ENCODE measurements at regions of chr17 and their contacts with region 1.

Region 1: DNA sequence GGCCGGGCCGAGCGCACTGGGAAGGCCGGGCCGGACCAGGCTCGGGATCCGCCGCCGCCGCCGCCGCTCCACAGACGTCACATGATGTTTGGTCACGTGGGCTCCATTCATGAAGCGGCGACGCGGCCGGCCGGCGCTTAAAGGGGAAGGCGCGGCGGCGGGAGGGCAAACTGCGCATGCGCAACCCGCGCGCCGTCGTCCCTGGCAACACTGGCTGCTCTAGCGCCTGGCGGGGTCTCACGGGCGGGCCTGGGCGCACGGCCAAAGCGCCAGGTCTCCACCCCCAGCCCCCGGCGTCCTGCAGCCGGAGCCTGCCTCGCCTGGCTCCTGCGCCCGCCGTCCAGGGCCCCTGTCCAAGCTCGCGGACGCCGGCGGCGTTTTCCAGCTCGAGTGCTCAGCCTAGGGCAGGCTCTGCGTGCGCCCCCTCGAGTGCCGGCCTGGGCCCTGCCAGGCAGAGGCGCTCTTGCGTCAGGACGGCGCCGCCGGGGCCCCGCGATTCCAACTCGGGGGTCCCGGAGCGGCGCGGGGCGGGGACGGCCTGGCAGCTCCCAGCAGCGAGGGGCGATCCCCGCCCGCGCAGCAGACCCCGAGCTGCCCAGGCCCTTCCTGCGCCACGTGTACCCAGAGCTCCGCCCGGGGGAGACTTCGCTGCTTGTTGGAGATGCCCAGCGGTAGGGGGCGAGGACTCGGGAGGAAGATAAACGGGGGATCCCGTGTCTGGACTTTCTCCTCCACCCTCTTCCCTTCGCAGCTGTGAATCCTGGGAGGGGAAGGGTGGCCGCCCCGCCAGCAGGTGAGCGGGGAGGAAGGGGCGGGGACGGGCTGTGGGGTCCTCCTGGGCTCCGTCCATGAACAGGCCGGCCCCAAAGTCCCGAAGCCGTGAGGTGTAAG is at the start of gene MAFG:
- DNase-seq: peak; percentile 85 to 92 (median 90)
- H3K4me3 ChIP-seq: peak within 1 kb of the TSS; percentile 47 to 60
- H3K4me3 Mint-ChIP-seq: peak within 1 kb of the TSS; percentile 81 to 90 (median 84)
- H3K27ac ChIP-seq: peak within 1 kb of the TSS; percentile 68
- H3K27ac Mint-ChIP-seq: peak within 1 kb of the TSS; percentile 84 to 97 (median 90)
- H3K4me1 ChIP-seq: peaks cover 43% of the 10 kb centered on the region
- H3K4me1 Mint-ChIP-seq: peaks cover 12 to 27% (median 20%) of the 10 kb centered on the region in 4 donors
- H3K27me3 ChIP-seq: peaks cover 10% of the 10 kb centered on the region
- H3K27me3 Mint-ChIP-seq: peaks cover 0 to 6% of the 10 kb centered on the region in 2 donors
- total RNA-seq, gene MAFG: 16.0 to 16.3 TPM

Region 2: DNA sequence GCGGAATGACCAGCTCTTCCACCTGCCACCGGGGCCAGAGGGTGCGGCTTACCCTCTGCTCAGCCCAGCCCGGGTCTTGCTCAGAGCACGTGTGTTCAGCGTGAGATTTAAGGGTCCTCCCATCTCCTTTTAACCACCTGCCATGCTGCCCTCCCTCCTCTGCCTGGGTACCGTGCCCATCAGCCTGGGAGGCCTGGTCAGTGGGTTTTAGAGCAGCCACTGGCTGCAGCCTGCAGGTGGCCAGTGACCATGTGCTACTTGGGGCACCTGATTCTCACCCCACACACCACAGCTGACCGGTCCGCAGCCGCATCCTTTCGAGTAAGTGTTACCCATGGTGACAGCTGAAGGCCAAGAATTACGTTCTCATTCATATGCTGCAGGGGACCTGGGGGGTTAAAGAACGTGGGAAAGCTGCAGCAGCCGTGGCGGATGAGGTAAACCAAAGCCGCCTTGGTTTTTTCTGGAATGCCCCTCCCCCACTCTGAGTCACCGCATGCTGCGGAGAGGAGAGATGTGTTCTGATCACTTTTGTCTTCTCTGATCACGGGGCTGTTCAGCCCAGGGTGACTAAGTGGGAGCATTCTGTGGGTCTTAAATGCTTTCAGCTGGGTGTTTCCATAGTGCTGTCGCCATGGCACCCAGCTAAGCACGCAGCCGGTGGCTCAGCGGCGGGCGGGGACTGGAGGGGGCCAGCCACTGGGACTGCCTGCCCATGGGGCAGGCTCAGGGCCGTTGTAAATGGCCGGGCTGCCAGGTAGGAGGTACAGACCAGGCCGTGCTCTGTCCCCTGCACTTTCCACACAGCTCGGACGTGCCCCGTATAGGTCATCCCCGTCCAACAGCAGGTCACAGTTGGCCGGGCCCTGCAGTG is 833.2 kb before region 1 on chr17:
- CTCF ChIA-PET with region 1: no interaction called
- POLR2A ChIA-PET with region 1: no interaction called
- intact Hi-C with region 1: loop called (anchors 10 kb)
- DNase-seq: peak; percentile 86 to 96 (median 88)
- H3K4me3 ChIP-seq: peak overlapping the region in 1 of 2 donors; percentile 10
- H3K4me3 Mint-ChIP-seq: peak overlapping the region; percentile 52 to 88 (median 70)
- H3K27ac ChIP-seq: peak overlapping the region; percentile 66
- H3K27ac Mint-ChIP-seq: peak overlapping the region; percentile 91 to 96 (median 93)
- H3K4me1 ChIP-seq: peaks cover 56% of the 10 kb centered on the region
- H3K4me1 Mint-ChIP-seq: peaks cover 24 to 56% (median 38%) of the 10 kb centered on the region in 4 donors
- H3K27me3 ChIP-seq: no peaks in the 10 kb centered on the region
- H3K27me3 Mint-ChIP-seq: no peaks in the 10 kb centered on the region

Region 3: GRCh38 chr17:81815646-81815986 is 112.3 kb before region 1 on chr17:
- CTCF ChIA-PET with region 1: no interaction called
- POLR2A ChIA-PET with region 1: no interaction called
- intact Hi-C with region 1: no loop called
- DNase-seq: no peak
- H3K4me3 ChIP-seq: no peak overlapping the region
- H3K4me3 Mint-ChIP-seq: no peak overlapping the region
- H3K27ac ChIP-seq: no peak overlapping the region
- H3K27ac Mint-ChIP-seq: no peak overlapping the region
- H3K4me1 ChIP-seq: no peaks in the 10 kb centered on the region
- H3K4me1 Mint-ChIP-seq: peaks cover 0 to 2% (median 0%) of the 10 kb centered on the region in 4 donors
- H3K27me3 ChIP-seq: no peaks in the 10 kb centered on the region
- H3K27me3 Mint-ChIP-seq: peaks cover 0 to 2% of the 10 kb centered on the region in 2 donors

Region 4: GRCh38 chr17:81852237-81852636 is 75.7 kb before region 1 on chr17:
- CTCF ChIA-PET with region 1: no interaction called
- POLR2A ChIA-PET with region 1: no interaction called
- intact Hi-C with region 1: no loop called
- DNase-seq: no peak
- H3K4me3 ChIP-seq: no peak overlapping the region
- H3K4me3 Mint-ChIP-seq: no peak overlapping the region
- H3K27ac ChIP-seq: no peak overlapping the region
- H3K27ac Mint-ChIP-seq: no peak overlapping the region
- H3K4me1 ChIP-seq: no peaks in the 10 kb centered on the region
- H3K4me1 Mint-ChIP-seq: peaks cover 0 to 15% (median under 1%) of the 10 kb centered on the region in 4 donors
- H3K27me3 ChIP-seq: no peaks in the 10 kb centered on the region
- H3K27me3 Mint-ChIP-seq: no peaks in the 10 kb centered on the region

Region 5: DNA sequence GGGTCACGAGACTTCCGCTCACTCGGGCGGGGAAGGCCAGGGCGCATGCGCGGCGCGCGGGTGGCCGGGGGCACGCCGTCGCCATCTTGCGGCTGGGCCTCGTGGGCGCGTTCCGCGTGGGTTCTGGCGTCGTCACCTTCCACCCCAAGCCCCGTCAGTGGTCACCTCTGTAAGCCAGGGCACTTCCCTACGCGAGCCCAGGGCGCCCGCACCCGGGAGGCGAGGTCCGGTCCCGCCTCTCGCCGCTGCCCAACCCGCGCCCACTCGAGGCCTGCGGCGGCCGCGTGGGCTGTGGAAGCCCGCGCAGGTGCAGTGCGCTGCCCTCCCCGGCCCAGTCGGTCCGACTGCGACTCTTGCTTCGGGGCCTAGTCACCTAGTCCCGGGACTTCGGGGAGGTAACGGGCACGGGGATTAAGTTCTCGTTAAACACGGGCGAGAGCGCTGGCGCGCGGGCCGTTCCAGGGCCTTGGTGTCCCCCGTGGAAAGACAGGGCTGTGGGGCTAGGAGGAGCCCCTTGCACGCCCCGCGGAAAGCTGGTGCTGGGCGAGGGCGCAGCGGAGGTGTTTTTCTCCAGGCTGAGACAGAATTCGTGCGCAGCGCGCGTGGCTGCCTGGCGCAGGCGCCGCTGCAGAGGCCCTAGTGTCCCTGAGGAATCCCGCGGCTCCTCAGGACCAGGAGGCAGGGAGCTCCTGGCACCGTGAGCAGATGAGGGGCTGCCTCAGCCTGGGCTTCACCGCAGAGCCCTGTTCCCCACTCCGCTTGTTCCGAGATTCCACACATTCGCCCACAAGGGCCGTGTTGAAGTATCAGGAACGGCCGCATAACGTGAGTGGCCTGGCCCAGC is 56.3 kb before region 1 on chr17:
- CTCF ChIA-PET with region 1: interaction called, 3 read pairs
- POLR2A ChIA-PET with region 1: interaction called, 40 read pairs
- intact Hi-C with region 1: no loop called
- DNase-seq: peak; percentile 95 to 97 (median 96)
- H3K4me3 ChIP-seq: peak overlapping the region; percentile 84 to 95
- H3K4me3 Mint-ChIP-seq: peak overlapping the region; percentile 81 to 91 (median 86)
- H3K27ac ChIP-seq: peak overlapping the region; percentile 95
- H3K27ac Mint-ChIP-seq: peak overlapping the region; percentile 93 to 97 (median 96)
- H3K4me1 ChIP-seq: peaks cover 50% of the 10 kb centered on the region
- H3K4me1 Mint-ChIP-seq: peaks cover 9 to 53% (median 30%) of the 10 kb centered on the region in 4 donors
- H3K27me3 ChIP-seq: no peaks in the 10 kb centered on the region
- H3K27me3 Mint-ChIP-seq: no peaks in the 10 kb centered on the region

Region 6: DNA sequence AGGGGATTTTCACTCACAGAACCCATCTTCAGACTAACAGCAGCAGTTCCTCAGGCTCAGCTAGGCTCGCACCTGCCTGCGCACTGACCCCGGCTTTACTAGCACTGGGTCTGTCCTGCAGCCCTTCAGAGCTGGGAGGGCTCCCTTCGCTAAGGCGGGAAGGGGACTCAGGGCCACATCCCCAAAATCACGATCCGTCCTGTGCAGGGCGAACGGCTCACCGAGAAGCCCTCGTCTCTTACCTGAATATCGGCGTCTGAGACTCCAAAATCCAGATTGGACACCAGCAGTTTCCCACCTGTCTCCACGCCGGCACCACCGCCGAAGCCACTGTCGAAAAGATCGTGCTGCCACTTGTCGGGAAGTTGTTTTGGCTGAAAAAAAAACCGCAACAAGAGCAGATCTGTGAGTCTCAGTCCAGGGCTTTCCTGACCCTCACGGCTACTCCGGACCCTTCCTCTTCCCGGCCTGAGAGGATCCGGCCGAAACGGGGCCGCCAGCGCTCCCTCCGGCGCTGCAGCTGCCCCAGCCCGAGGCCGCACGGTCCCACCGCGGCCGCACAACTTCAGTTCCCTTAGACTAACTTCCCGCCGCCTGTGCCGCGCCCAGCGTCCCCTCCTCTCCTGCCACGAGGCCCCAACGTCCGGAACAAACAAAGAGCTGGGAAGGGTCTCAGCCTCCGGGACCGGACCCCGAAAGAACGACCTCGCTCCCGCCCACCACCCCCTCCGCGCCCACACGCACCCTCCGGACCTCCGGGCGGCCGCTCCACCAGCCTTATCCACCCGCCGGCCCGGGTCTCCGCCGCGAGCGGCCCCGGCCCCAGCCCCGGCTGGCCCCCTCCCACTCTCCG is 37.2 kb before region 1 on chr17:
- CTCF ChIA-PET with region 1: no interaction called
- POLR2A ChIA-PET with region 1: interaction called, 17 read pairs
- intact Hi-C with region 1: loop called (anchors 2 kb)
- DNase-seq: no peak
- H3K4me3 ChIP-seq: peak overlapping the region; percentile 42 to 60
- H3K4me3 Mint-ChIP-seq: peak overlapping the region; percentile 85 to 92 (median 89)
- H3K27ac ChIP-seq: peak overlapping the region; percentile 64
- H3K27ac Mint-ChIP-seq: peak overlapping the region; percentile 89 to 97 (median 96)
- H3K4me1 ChIP-seq: peaks cover 20% of the 10 kb centered on the region
- H3K4me1 Mint-ChIP-seq: peaks cover 8 to 33% (median 17%) of the 10 kb centered on the region in 4 donors
- H3K27me3 ChIP-seq: no peaks in the 10 kb centered on the region
- H3K27me3 Mint-ChIP-seq: no peaks in the 10 kb centered on the region

Region 7: GRCh38 chr17:81911277-81911961 is 16.5 kb before region 1 on chr17 and contains the start of gene PCYT2:
- CTCF ChIA-PET with region 1: interaction called, 3 read pairs
- POLR2A ChIA-PET with region 1: interaction called, 33 read pairs
- intact Hi-C with region 1: no loop called
- DNase-seq: peak; percentile 90 to 94 (median 93)
- H3K4me3 ChIP-seq: peak within 1 kb of the TSS; percentile 8 to 70
- H3K4me3 Mint-ChIP-seq: peak within 1 kb of the TSS; percentile 81 to 90 (median 86)
- H3K27ac ChIP-seq: peak within 1 kb of the TSS; percentile 55
- H3K27ac Mint-ChIP-seq: peak within 1 kb of the TSS in 6 of 7 donors; percentile 8 to 85 (median 82)
- H3K4me1 ChIP-seq: peaks cover 26% of the 10 kb centered on the region
- H3K4me1 Mint-ChIP-seq: peaks cover 5 to 34% (median 10%) of the 10 kb centered on the region in 4 donors
- H3K27me3 ChIP-seq: no peaks in the 10 kb centered on the region
- H3K27me3 Mint-ChIP-seq: no peaks in the 10 kb centered on the region
- total RNA-seq, gene PCYT2: 43.5 to 48.3 TPM

Region 8: DNA sequence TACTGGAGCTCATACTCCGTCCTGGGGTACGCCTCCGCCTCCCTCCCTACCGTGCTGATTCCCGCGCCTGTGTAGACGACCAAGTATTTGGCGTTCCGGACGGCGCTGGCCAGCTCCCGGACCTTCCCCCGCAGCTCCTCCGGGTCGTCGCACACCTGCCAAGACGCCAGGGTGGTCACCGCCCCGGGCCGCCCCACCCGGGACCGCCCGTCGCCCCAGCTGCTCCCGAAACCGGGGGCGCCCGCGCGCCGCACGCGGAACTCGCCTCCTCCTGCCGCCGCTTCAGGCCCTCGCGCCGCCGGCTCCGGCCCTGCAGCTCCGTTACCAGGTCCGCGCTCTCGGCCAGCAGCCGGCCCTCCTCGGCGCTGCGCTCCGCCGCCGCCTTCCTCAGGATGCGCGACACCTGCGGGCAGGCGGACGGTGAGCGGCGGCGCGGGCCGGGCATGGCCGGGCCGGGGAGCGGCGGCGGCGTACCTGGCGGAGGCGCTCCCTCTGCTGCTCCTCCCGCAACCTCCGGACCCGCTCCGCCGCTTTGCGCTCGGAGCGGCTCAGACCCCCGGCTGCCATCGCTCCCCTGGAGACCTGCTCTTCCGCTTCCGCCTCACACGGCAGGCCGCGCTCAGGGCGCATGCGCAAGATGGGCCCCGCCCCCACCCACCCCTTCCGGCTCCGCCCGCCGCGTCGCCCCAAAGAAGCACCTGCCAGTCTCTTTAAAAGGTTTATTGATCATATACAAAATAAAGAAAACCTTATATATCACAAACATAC is 10.1 kb before region 1 on chr17 and contains the start of gene SIRT7:
- CTCF ChIA-PET with region 1: interaction called, 4 read pairs
- POLR2A ChIA-PET with region 1: interaction called, 33 read pairs
- intact Hi-C with region 1: loop called (anchors 1 kb)
- DNase-seq: peak; percentile 79 to 81 (median 80)
- H3K4me3 ChIP-seq: peak within 1 kb of the TSS; percentile 30 to 66
- H3K4me3 Mint-ChIP-seq: peak within 1 kb of the TSS; percentile 86 to 95 (median 92)
- H3K27ac ChIP-seq: peak within 1 kb of the TSS; percentile 64
- H3K27ac Mint-ChIP-seq: peak within 1 kb of the TSS; percentile 80 to 94 (median 90)
- H3K4me1 ChIP-seq: peaks cover 27% of the 10 kb centered on the region
- H3K4me1 Mint-ChIP-seq: peaks cover 13 to 42% (median 26%) of the 10 kb centered on the region in 4 donors
- H3K27me3 ChIP-seq: no peaks in the 10 kb centered on the region
- H3K27me3 Mint-ChIP-seq: no peaks in the 10 kb centered on the region
- total RNA-seq, gene SIRT7: 87.8 to 91.9 TPM

Region 9: GRCh38 chr17:81941790-81942553 is 14.1 kb after region 1 on chr17:
- CTCF ChIA-PET with region 1: no interaction called
- POLR2A ChIA-PET with region 1: interaction called, 17 read pairs
- intact Hi-C with region 1: loop called (anchors 1 kb)
- DNase-seq: no peak
- H3K4me3 ChIP-seq: no peak overlapping the region
- H3K4me3 Mint-ChIP-seq: no peak overlapping the region
- H3K27ac ChIP-seq: no peak overlapping the region
- H3K27ac Mint-ChIP-seq: no peak overlapping the region
- H3K4me1 ChIP-seq: peaks cover 4% of the 10 kb centered on the region
- H3K4me1 Mint-ChIP-seq: peaks cover 0 to 5% (median 0%) of the 10 kb centered on the region in 4 donors
- H3K27me3 ChIP-seq: no peaks in the 10 kb centered on the region
- H3K27me3 Mint-ChIP-seq: peaks cover 2 to 5% of the 10 kb centered on the region in 2 donors